ENCODE measurements at regions of chr9 and their contacts with region 1.

Region 1: DNA sequence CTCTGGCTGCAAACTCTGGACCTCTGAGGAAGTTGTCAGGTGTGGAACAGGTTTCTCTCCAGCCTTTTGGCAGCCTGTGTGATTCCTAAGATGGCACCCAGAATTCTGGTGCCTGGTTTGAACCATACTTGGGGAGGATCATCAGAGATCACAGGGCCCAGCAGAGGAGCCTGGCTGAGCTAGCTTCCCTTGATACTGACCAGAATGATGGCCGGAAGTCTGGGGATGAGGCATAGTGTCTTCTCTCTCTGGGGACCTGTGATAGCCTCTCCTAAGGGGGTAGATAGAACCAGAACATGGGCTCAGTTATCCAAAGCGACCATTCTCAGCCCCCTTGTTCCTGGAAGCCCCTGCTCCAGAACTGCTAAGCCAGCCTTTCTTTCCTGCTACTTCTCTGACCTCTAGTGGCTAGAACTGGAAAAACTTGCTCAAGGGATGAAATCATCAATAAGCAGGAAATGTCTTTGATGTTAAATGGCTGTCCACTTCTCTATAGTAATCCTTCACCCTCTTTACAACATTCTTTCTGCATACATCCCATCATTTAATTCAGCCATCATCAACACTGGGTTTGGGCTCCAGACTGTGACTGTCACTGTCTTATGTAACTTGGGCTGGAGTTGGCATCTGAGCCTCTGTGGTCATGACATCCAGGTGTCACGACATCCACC is 55.1 kb downstream of the C9orf152 start:
- DNase-seq: no peak
- ATAC-seq: peak; percentile 24

Region 2: DNA sequence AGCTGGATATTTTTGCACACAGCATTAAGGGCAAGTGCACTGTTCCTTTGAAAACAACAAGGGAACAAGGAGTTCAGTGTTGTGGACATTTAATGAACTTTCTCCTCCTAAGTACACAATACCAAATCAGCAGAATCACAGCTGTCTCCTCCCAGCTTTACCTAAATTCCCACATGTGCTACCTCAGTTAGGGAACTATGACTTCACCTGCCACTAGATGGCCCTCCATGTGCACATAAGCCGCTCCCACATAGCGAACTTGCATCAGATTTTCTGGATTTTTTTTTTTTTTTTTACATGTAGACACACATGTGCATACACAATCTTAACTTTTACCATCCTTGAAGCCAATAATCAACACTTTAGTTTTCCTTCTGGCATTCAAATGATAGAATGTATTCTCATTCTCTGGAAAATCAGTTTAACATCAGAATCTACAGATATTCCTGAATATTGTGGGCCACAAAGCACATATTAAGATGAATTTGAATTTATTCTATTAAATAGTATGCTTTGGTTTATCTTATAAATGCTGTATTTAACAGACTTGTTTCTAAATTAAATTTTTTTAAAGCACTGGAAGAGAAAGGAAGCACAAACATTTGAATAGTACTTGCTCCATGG is 249.2 kb before region 1 on chr9:
- intact Hi-C with region 1: loop called (anchors 2 kb)
- DNase-seq: peak; percentile 53
- ATAC-seq: peak; percentile 72

Region 3: DNA sequence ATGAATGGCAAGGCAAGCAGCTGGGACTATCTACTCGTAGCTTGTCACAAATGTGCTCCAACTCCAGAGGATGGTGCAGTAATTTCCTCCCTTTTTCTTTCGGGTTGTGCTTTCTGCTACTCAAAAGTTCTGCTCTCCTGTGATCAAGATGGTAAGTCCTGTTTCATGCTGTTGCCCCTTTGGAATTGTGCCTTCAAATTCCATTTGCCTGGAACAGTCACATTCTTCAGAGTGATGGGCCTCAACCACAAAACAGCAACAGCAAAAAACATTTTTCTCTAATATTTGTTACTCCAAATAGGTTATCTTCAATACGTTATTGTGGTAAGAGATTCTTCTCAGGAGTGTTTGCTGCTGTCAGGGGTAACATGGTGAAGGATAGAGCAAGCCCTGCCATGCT is 163.5 kb before region 1 on chr9:
- intact Hi-C with region 1: no loop called
- DNase-seq: no peak
- ATAC-seq: no peak

Region 4: DNA sequence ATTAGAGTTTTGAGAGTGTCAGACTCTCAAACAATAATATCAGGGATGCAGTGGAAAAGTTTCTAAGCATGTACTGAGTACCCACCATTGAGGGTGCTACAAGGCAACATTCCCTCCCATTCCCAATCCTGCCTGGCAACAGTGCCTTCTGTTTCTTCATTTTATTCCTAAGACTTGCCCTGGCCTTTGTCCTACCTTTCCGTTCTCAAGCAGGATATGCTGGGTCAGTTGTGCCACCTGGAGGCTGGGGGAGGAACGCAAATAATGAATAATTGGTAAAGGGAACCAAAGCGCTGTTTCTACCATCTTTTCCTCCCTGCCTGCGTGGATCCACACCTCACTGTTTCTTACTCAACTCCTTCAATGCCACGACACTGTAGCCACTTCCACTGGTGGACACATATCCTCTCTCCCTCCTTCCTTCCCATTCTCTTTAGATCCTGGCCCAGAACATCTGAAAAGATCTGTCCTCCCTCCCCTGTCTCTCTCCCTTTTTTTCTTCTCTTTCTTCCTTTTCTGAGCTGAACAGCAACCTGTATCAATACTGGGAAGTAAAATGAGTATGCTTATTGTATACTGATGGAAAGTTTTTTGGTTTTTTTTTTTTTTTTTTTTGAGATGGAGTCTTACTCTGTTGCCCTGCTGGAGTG is 94.4 kb before region 1 on chr9:
- intact Hi-C with region 1: loop called (anchors 5 kb)
- DNase-seq: no peak
- ATAC-seq: peak; percentile 78

Region 5: GRCh38 chr9:110183208-110184145 is 30.6 kb after region 1 on chr9:
- intact Hi-C with region 1: no loop called
- DNase-seq: no peak
- ATAC-seq: peak; percentile 80